Endothelial cell of umbilical vein (primary cell): ENCODE measurements at regions of chr4 and their contacts with region 1.

Region 1: DNA sequence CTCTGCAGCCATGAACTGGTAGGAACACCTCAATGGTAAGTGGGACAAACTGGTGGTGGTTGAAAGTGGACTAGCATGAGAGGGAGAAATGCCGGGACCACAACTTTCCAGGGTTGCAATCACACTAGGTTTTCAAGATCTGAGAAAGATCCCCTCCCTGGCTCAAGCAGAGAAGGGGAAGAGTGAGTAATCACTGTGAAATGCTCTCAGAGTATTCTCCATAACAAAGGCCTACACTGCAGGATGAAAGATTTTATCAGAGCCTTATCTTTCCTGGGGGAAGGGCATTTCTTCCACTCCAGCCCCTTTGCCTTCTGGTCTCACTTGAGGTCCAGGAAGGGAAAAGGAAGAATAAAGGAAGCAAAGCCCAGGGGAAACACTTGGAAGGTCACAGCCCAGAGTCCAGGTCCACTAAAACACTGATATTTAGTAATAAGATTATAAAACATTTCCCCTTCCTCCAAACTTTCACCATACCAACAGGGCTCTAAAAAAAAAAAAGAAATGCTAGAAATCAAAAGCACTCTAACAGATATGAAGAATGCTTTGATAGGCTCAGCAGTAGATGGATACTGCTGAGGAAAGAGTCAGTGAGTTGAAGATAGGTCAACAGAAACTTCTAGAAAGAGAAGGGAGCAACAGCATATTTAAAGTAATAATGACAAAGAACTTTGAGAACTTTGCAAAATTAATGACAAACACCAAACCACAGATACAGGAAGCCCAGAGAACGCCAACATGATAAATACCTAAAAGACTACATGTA is 95.9 kb downstream of the WDFY3 start:
- DNase-seq: peak; percentile 94
- H3K4me3 ChIP-seq: peak overlapping the region in 2 of 3 experiments; percentile 67 to 92
- H3K27ac ChIP-seq: peak overlapping the region; percentile 94
- H3K4me1 ChIP-seq: peaks cover 33% of the 10 kb centered on the region
- H3K27me3 ChIP-seq: no peaks in the 10 kb centered on the region
- CTCF ChIP-seq: no peak
- POLR2A ChIP-seq: peak; percentile 68

Region 2: DNA sequence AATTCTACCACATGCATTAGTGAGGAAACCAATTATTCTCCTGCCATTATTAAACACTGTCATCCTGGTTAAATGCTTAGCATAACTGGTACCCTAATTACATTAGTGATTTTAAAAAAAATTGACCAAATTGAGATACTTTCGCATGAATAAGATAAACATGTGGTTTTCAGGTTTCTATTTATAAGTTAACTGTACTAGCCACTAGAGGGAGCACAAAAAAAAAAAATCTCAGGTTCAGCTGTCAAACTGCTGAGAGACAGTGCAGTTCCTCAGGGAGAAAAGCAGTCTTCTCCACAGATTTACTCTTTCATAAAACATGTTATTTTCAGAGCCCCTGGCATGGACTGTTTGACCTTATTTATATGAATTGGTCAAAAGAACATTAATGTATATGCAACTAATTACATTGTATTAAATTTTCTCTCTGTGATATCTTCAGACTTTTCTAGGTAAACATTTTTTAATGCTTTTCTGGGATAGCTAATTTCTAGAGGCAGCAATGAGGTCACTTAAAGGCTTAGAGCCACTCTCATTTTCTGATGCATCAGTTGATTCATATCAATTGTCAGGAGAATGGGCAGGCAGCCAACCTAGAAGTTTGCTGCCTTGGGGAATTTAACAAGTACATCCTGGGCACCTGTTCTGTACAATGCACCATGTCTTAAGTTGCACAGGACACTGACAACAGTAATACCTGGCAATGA is 120.2 kb before region 1 on chr4:
- CTCF ChIA-PET with region 1: no interaction called
- POLR2A ChIA-PET with region 1: no interaction called
- dilution Hi-C with region 1: no loop called
- intact Hi-C with region 1: loop called (anchors 2 kb)
- DNase-seq: peak; percentile 64
- H3K4me3 ChIP-seq: no peak overlapping the region
- H3K27ac ChIP-seq: no peak overlapping the region
- H3K4me1 ChIP-seq: no peaks in the 10 kb centered on the region
- H3K27me3 ChIP-seq: no peaks in the 10 kb centered on the region
- CTCF ChIP-seq: peak; percentile 32 to 35
- POLR2A ChIP-seq: no peak

Region 3: GRCh38 chr4:84803720-84804119 is 66.9 kb before region 1 on chr4:
- CTCF ChIA-PET with region 1: interaction called, 3 read pairs
- POLR2A ChIA-PET with region 1: no interaction called
- dilution Hi-C with region 1: no loop called
- intact Hi-C with region 1: loop called (anchors 1 kb)
- DNase-seq: peak; percentile 49
- H3K4me3 ChIP-seq: no peak overlapping the region
- H3K27ac ChIP-seq: peak overlapping the region; percentile 38
- H3K4me1 ChIP-seq: peaks cover 47% of the 10 kb centered on the region
- H3K27me3 ChIP-seq: no peaks in the 10 kb centered on the region
- CTCF ChIP-seq: no peak
- POLR2A ChIP-seq: no peak

Region 4: GRCh38 chr4:84852081-84852480 is 18.5 kb before region 1 on chr4:
- CTCF ChIA-PET with region 1: interaction called, 4 read pairs
- POLR2A ChIA-PET with region 1: no interaction called
- dilution Hi-C with region 1: no loop called
- intact Hi-C with region 1: loop called (anchors 2 kb)
- DNase-seq: peak; percentile 92
- H3K4me3 ChIP-seq: peak overlapping the region in 1 of 3 experiments; percentile 12
- H3K27ac ChIP-seq: peak overlapping the region; percentile 51
- H3K4me1 ChIP-seq: peaks cover 12% of the 10 kb centered on the region
- H3K27me3 ChIP-seq: no peaks in the 10 kb centered on the region
- CTCF ChIP-seq: no peak
- POLR2A ChIP-seq: no peak

Region 5: GRCh38 chr4:84938316-84938715 is 67.7 kb after region 1 on chr4:
- CTCF ChIA-PET with region 1: no interaction called
- POLR2A ChIA-PET with region 1: no interaction called
- dilution Hi-C with region 1: no loop called
- intact Hi-C with region 1: loop called (anchors 2 kb)
- DNase-seq: peak; percentile 85
- H3K4me3 ChIP-seq: peak overlapping the region in 1 of 3 experiments; percentile 37
- H3K27ac ChIP-seq: peak overlapping the region; percentile 53
- H3K4me1 ChIP-seq: peaks cover 28% of the 10 kb centered on the region
- H3K27me3 ChIP-seq: no peaks in the 10 kb centered on the region
- CTCF ChIP-seq: no peak
- POLR2A ChIP-seq: no peak